Naive thymus-derived CD4-positive, alpha-beta T cell (primary cell): ENCODE measurements at regions of chr1 and their contacts with region 1.

Region 1: DNA sequence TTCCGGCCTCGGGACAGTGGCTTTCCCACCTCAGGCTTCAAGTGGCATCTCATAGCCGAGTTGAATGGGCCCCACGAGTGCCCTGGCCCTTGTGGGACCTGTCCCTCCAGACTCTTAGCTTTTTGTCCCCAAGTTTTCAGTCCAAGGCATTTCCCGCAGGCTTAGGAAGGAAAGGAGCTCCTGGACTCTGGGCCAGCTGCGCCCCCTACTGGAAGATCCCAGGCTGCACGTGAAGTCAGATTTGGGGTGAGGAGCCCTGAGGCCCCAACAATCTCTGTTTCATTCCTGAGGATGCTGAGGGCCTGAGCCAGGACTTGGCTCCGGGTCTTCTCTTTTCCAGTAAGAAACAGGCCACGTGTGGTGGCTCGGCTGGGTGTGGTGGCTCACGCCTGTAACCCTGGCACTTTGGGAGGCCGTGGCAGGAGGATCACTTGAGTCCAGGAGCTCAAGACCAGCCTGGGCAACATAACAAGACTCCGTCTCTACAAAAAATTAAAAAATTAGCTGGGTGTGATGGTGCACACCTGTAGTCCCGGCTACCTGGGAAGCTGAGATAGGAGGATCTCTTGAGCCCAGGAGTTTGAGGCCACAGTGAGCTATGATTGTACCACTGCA is 67.4 kb downstream of the ARHGEF10L start:
- DNase-seq: peak in 3 of 9 donors; percentile 2 to 54 (median 12)
- ATAC-seq: no peak
- H3K4me3 ChIP-seq: no peak overlapping the region
- H3K4me3 Mint-ChIP-seq: no peak overlapping the region
- H3K27ac ChIP-seq: no peak overlapping the region
- H3K27ac Mint-ChIP-seq: no peak overlapping the region
- H3K4me1 ChIP-seq: no peaks in the 10 kb centered on the region
- H3K4me1 Mint-ChIP-seq: peaks cover 0 to 6% (median 0%) of the 10 kb centered on the region in 7 donors
- H3K27me3 ChIP-seq: no peaks in the 10 kb centered on the region
- H3K27me3 Mint-ChIP-seq: peaks cover 0 to 7% (median 0%) of the 10 kb centered on the region in 5 donors

Region 2: DNA sequence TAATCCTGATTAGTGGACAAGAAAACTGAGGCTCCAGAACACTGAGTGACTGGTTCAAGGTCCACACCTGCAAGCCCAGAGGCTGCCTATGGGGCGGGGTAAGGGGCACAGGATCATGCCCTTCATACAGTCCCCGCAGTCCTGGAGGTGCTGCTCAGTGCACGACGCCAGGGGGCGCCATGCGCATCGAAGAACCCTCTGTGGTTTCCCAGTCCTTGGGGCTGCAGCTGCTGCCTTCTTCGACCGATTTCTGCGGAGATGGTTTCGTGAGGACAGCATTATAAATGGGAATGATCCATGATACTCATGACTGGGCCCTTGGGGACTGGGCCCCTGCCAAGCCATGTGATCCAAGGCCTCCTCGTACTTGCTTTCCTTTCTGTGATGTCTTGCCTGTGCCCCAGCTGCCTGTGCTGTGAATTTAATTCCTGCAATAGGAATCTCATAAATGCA is 104.6 kb before region 1 on chr1:
- CTCF ChIA-PET with region 1: no interaction called
- POLR2A ChIA-PET with region 1: no interaction called
- intact Hi-C with region 1: loop called in 1 of 2 experiments (anchors 5 kb)
- DNase-seq: peak in 4 of 9 donors; percentile 9 to 63 (median 30)
- ATAC-seq: peak; percentile 82
- H3K4me3 ChIP-seq: no peak overlapping the region
- H3K4me3 Mint-ChIP-seq: no peak overlapping the region
- H3K27ac ChIP-seq: no peak overlapping the region
- H3K27ac Mint-ChIP-seq: no peak overlapping the region
- H3K4me1 ChIP-seq: no peaks in the 10 kb centered on the region
- H3K4me1 Mint-ChIP-seq: peaks cover 0 to 4% (median 0%) of the 10 kb centered on the region in 7 donors
- H3K27me3 ChIP-seq: peaks cover 0 to 4% of the 10 kb centered on the region in 2 donors
- H3K27me3 Mint-ChIP-seq: peaks cover 0 to 12% (median 10%) of the 10 kb centered on the region in 5 donors

Region 3: DNA sequence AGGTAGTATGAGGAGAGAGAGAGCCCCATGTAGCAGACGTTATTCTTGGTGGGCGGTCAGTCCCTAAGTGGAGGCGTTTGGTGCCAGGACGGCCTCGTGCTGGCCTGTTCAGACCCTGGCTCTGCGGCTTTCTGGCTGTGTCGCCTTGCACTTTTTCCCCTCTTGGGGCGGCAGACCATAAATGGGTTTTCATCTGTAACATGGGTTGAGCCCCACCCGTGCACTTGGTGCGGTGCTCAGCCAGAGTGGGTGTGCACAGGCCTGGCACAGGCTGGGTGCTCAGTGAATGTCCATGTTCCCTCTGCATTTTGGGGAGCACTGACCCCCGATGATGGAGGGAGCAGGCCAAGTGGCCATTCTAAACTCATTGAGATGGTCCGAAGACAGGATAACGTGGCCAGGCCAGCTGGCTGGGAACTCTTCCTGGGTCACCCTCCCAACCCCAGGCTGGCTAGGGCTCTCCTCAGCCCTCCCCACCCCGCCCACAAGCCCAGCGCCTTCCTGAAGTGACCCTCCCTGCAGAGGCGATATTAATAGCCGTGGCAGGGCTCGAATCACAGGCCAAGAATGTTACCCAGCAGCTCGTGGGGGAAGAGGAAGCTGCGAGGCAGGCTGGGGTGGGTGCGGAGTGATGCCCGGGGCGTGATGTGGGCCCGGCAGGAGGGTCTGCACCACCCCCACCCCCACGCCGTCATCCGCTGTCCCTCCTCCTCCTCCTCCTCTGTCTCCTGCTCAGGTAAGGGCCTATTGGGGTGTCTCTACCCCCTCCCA is 11.0 kb after region 1 on chr1:
- CTCF ChIA-PET with region 1: no interaction called
- POLR2A ChIA-PET with region 1: no interaction called
- intact Hi-C with region 1: no loop called
- DNase-seq: no peak
- ATAC-seq: no peak
- H3K4me3 ChIP-seq: no peak overlapping the region
- H3K4me3 Mint-ChIP-seq: no peak overlapping the region
- H3K27ac ChIP-seq: no peak overlapping the region
- H3K27ac Mint-ChIP-seq: no peak overlapping the region
- H3K4me1 ChIP-seq: no peaks in the 10 kb centered on the region
- H3K4me1 Mint-ChIP-seq: peaks cover 0 to 5% (median 0%) of the 10 kb centered on the region in 7 donors
- H3K27me3 ChIP-seq: no peaks in the 10 kb centered on the region
- H3K27me3 Mint-ChIP-seq: peaks cover 0 to 29% (median 14%) of the 10 kb centered on the region in 5 donors